Cardiac septum (tissue), 1 donor: ENCODE measurements at regions of chr3 and their contacts with region 1.

Region 1: DNA sequence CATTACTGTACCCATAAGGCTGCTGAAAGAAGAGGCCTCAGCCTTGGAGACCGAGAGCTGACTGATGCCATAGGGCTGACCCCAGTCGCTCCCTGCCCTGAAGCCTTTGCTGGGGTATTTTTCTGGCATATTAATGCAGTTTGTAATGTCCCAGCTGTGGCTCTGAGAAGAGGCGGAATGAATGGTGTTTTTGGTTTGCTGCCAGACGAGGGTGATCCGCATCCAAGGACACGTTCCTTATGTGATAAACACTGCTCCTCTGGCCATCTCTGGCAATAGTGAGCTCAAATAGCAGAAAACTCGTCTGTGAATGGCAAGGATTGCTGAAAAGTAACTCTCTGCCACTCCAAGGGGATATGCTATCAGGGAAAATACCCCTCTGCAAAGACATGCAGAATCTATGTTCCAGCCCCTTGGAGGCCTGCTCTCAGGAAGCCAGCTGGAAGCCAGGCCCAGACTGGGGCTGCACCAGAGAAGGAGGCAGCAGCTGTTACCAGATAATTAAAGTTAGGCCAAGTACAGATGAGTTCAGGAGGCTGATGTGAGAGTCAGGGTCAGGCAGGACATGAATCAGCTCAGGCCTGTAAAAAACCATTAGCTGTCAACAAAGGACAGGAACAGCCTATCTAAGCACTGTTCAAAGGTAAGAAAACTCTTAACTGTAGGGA is 28.9 kb upstream of the KLHL6 start:
- DNase-seq: no peak

Region 2: DNA sequence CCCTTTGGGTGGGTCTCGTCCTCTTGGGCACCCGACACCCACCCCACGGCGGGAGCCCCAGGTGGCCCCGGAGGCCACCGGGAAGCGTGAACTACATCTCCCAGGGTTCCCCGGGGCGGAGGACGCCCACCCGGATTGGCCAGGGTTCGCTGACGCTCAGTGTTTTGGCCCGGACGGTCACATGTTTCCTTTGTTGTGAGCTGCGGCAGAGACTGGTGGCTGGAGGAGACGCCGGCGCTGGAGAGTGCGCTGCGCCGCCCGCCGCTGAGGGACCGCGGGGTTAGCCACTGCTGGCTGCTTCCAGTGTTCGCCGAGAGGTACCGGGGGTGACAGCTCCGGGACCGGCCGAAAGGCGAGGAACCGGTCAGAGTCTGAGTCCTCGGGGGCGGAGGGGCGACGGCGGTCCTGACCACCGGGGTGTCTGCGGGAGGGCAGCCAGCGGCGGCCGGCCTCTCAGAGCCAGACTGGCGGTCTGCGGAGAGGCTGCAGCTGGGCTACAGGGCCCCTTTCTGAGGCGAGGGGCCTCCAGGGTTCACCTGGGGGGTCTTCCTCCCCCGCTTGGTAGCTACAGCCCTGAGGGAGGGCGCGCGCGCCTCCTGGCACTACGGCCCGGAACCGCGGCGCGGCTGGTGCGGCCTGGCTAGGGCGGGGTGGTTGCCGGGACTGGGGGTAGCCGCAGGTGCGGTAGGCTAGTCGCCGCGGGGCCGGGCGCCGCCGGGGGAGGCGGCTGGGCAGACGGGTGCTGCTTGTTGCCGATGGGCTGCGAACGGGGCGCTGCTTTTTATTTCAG is 51.2 kb after region 1 on chr3 and contains the start of gene KLHL24:
- intact Hi-C with region 1: loop called (anchors 1 kb)
- DNase-seq: peak; percentile 98
- total RNA-seq, gene KLHL24: 134 TPM